Motor neuron (in vitro differentiated cells): ENCODE measurements at regions of chrX and their contacts with region 1.

Region 1: DNA sequence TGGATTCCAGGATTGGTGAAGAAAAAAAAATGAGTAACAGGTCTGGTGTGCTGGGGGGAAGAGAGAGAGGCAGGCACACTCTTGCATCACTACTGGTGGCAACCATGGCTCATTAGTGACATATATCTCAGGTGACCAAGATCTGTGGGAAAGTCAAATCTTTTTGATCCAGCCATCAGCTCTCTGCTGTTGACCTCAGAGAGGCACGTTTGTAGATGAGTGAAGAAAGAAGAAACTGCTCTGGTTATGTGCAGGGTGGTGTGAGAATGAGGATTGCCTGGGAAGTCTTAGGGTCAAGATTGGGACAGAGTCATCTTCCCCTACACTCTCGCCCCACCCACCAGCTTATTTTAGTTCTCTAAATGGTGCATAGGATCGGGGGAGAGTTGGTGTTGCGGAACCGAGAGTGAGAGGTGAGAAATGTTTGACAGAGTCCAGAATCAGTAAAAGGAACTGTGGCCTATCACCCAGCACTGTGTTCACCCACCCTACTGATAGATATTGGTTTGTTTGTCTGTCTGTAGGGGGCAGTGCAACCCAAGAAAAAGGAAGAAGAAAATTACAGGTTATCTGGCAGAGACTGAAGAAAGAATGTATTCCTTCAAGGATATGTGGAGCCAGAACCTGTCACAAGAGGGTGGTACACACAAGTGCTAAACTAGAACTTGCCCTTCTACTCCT is 21.9 kb downstream of the ARMCX6 start:
- ATAC-seq: peak; percentile 72 to 97 (median 88)
- H3K4me3 ChIP-seq: no peak overlapping the region
- H3K27ac ChIP-seq: no peak overlapping the region
- H3K4me1 ChIP-seq: no peaks in the 10 kb centered on the region

Region 2: GRCh38 chrX:101799387-101799786 is 203.5 kb after region 1 on chrX:
- in situ Hi-C with region 1: loop called in 2 of 9 experiments (anchors 10 to 25 kb)
- ATAC-seq: peak; percentile 94 to 100 (median 98)
- H3K4me3 ChIP-seq: no peak overlapping the region
- H3K27ac ChIP-seq: no peak overlapping the region
- H3K4me1 ChIP-seq: no peaks in the 10 kb centered on the region